ENCODE measurements at regions of chr12 and their contacts with region 1.

Region 1: GRCh38 chr12:55932551-55932910 is 1.6 kb downstream of the DGKA start:
- DNase-seq: peak; percentile 62
- H3K4me3 Mint-ChIP-seq: peak overlapping the region; percentile 92
- H3K27ac Mint-ChIP-seq: peak overlapping the region; percentile 100
- H3K4me1 Mint-ChIP-seq: peaks cover 58% of the 10 kb centered on the region
- H3K27me3 Mint-ChIP-seq: no peaks in the 10 kb centered on the region

Region 2: GRCh38 chr12:55817346-55818139 is 115.0 kb before region 1 on chr12 and contains the starts of genes ORMDL2 and SARNP:
- CTCF ChIA-PET with region 1: interaction called, 12 read pairs
- DNase-seq: peak; percentile 99
- H3K4me3 Mint-ChIP-seq: no peak within 1 kb of the TSS
- H3K27ac Mint-ChIP-seq: no peak within 1 kb of the TSS
- H3K4me1 Mint-ChIP-seq: peaks cover 46% of the 10 kb centered on the region
- H3K27me3 Mint-ChIP-seq: no peaks in the 10 kb centered on the region

Region 3: GRCh38 chr12:55829967-55830600 is 102.4 kb before region 1 on chr12:
- CTCF ChIA-PET with region 1: interaction called, 13 read pairs
- DNase-seq: peak; percentile 62
- H3K4me3 Mint-ChIP-seq: peak overlapping the region; percentile 97
- H3K27ac Mint-ChIP-seq: peak overlapping the region; percentile 94
- H3K4me1 Mint-ChIP-seq: peaks cover 66% of the 10 kb centered on the region
- H3K27me3 Mint-ChIP-seq: no peaks in the 10 kb centered on the region

Region 4: DNA sequence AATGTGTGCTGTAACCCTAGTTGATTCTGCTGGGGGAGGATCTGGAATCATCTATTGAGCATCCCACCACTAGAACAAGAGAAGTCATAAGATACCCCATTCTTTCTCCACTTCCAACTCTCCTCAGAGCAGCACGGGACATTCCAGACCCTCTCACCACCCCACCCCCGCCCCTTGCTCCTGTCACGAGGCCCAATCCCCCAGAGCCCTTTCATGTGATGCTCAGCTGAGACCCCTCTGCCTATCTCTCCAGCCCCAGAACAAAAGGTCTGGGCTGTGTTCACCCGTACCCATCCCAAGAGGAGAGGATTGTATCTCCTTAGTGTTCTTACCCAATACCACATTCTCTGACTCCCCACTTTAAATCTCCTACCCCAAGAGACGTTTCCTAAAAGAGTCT is 32.7 kb after region 1 on chr12:
- CTCF ChIA-PET with region 1: no interaction called
- DNase-seq: no peak
- H3K4me3 Mint-ChIP-seq: peak overlapping the region; percentile 92
- H3K27ac Mint-ChIP-seq: no peak overlapping the region
- H3K4me1 Mint-ChIP-seq: peaks cover 43% of the 10 kb centered on the region
- H3K27me3 Mint-ChIP-seq: peaks cover 4% of the 10 kb centered on the region